ENCODE measurements at regions of chr12 and their contacts with region 1.

Region 1: DNA sequence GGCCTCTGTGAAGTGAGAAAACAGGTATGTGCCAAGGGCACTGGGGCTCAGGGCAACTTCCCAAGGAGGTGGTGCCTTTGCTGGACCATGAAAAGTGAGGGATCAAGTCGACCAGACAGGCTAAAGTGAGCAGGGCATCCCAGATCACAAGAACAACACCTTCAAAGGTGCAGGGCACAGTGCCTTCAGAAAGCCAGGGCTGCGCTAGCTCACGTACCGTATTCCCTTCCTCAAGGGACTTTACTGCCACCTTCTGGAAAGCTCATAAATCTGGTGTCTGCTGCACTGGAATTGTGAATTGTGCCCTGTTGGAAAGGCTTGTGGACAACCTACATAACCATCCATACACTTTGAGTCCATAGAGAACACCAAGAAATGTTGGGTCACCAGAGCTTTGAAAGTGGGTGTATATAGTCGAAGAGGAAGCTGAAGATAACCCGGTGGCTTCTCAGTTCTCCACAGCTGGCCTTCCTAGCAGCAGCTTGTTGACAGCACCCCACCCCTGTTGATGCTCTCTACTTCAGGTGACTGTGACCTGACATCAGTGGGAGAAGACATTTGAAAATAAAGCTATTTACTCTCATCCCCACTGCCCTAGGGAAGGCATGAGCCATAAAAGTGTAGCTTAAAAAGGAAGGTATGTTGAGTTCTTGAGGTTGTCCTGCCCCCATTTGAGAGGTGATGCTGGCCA is 24.5 kb downstream of the FIGNL2 start:
- DNase-seq: peak in 4 of 9 experiments; percentile 22 to 71 (median 45)
- ATAC-seq: no peak
- H3K4me3 ChIP-seq: no peak overlapping the region
- H3K4me3 Mint-ChIP-seq: no peak overlapping the region
- H3K27ac ChIP-seq: peak overlapping the region in 1 of 2 experiments; percentile 15
- H3K27ac Mint-ChIP-seq: peak overlapping the region; percentile 62
- H3K4me1 ChIP-seq: peaks cover 23% of the 10 kb centered on the region
- H3K4me1 Mint-ChIP-seq: peaks cover 41% of the 10 kb centered on the region
- H3K27me3 ChIP-seq: no peaks in the 10 kb centered on the region
- H3K27me3 Mint-ChIP-seq: no peaks in the 10 kb centered on the region
- CTCF ChIP-seq: peak; percentile 18

Region 2: GRCh38 chr12:51424662-51425438 is 399.2 kb before region 1 on chr12 and contains the start of gene SLC4A8:
- CTCF ChIA-PET with region 1: interaction called, 6 read pairs
- POLR2A ChIA-PET with region 1: no interaction called
- intact Hi-C with region 1: loop called (anchors 1 to 2 kb)
- DNase-seq: peak; percentile 46 to 88 (median 71)
- ATAC-seq: peak; percentile 81
- H3K4me3 ChIP-seq: peak within 1 kb of the TSS; percentile 68 to 82
- H3K4me3 Mint-ChIP-seq: peak within 1 kb of the TSS; percentile 82
- H3K27ac ChIP-seq: peak within 1 kb of the TSS in 1 of 2 experiments; percentile 28
- H3K27ac Mint-ChIP-seq: no peak within 1 kb of the TSS
- H3K4me1 ChIP-seq: peaks cover 5% of the 10 kb centered on the region
- H3K4me1 Mint-ChIP-seq: peaks cover 16% of the 10 kb centered on the region
- H3K27me3 ChIP-seq: no peaks in the 10 kb centered on the region
- H3K27me3 Mint-ChIP-seq: no peaks in the 10 kb centered on the region
- CTCF ChIP-seq: peak; percentile 63
- total RNA-seq, gene SLC4A8: 1.5 to 2.4 TPM

Region 3: DNA sequence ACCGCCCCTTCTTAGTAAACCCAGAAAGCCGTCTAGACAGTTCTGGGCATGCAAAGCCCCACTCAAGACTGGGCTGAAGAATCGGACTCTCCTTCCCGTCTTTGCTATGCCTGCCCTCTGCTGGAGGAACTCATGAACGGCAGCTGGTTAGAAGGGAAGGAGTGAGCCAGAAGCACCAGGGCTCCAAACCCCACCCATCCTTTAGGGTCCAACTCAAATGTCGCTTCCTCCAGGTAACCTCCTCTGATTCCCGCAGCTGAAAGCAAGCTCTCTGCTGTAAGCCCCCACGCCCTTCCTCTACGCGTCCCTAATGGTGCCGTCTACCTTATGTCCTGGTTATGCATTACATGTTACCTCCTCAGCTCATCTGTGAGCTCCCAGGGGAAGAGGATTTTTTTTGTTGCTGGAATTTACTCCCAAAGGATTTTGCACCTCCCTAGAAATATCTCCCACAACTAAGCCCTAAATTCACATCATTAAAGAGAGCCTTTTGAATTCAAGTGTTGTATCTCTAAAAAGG is 292.0 kb before region 1 on chr12:
- CTCF ChIA-PET with region 1: interaction called, 17 read pairs
- POLR2A ChIA-PET with region 1: no interaction called
- intact Hi-C with region 1: loop called (anchors 5 kb)
- DNase-seq: peak; percentile 49 to 84 (median 73)
- ATAC-seq: peak; percentile 89
- H3K4me3 ChIP-seq: no peak overlapping the region
- H3K4me3 Mint-ChIP-seq: no peak overlapping the region
- H3K27ac ChIP-seq: no peak overlapping the region
- H3K27ac Mint-ChIP-seq: no peak overlapping the region
- H3K4me1 ChIP-seq: no peaks in the 10 kb centered on the region
- H3K4me1 Mint-ChIP-seq: peaks cover 7% of the 10 kb centered on the region
- H3K27me3 ChIP-seq: no peaks in the 10 kb centered on the region
- H3K27me3 Mint-ChIP-seq: peaks cover 2% of the 10 kb centered on the region
- CTCF ChIP-seq: peak; percentile 82

Region 4: GRCh38 chr12:51590347-51591019 is 233.5 kb before region 1 on chr12:
- CTCF ChIA-PET with region 1: interaction called, 3 read pairs
- POLR2A ChIA-PET with region 1: interaction called, 3 read pairs
- intact Hi-C with region 1: loop called (anchors 2 to 10 kb)
- DNase-seq: peak; percentile 55 to 87 (median 72)
- ATAC-seq: peak; percentile 84
- H3K4me3 ChIP-seq: peak overlapping the region; percentile 46 to 50
- H3K4me3 Mint-ChIP-seq: peak overlapping the region; percentile 88
- H3K27ac ChIP-seq: no peak overlapping the region
- H3K27ac Mint-ChIP-seq: peak overlapping the region; percentile 64
- H3K4me1 ChIP-seq: peaks cover 12% of the 10 kb centered on the region
- H3K4me1 Mint-ChIP-seq: peaks cover 20% of the 10 kb centered on the region
- H3K27me3 ChIP-seq: peaks cover 0 to 12% of the 10 kb centered on the region in 2 experiments
- H3K27me3 Mint-ChIP-seq: peaks cover 37% of the 10 kb centered on the region
- CTCF ChIP-seq: peak; percentile 56

Region 5: GRCh38 chr12:51871126-51871525 is 47.1 kb after region 1 on chr12:
- CTCF ChIA-PET with region 1: interaction called, 8 read pairs
- POLR2A ChIA-PET with region 1: no interaction called
- intact Hi-C with region 1: loop called in 1 of 2 experiments (anchors 2 kb)
- DNase-seq: peak in 1 of 9 experiments; percentile 25
- ATAC-seq: no peak
- H3K4me3 ChIP-seq: no peak overlapping the region
- H3K4me3 Mint-ChIP-seq: no peak overlapping the region
- H3K27ac ChIP-seq: no peak overlapping the region
- H3K27ac Mint-ChIP-seq: no peak overlapping the region
- H3K4me1 ChIP-seq: peaks cover 6% of the 10 kb centered on the region
- H3K4me1 Mint-ChIP-seq: peaks cover 11% of the 10 kb centered on the region
- H3K27me3 ChIP-seq: peaks cover 8 to 15% of the 10 kb centered on the region in 2 experiments
- H3K27me3 Mint-ChIP-seq: peaks cover 49% of the 10 kb centered on the region
- CTCF ChIP-seq: no peak

Region 6: DNA sequence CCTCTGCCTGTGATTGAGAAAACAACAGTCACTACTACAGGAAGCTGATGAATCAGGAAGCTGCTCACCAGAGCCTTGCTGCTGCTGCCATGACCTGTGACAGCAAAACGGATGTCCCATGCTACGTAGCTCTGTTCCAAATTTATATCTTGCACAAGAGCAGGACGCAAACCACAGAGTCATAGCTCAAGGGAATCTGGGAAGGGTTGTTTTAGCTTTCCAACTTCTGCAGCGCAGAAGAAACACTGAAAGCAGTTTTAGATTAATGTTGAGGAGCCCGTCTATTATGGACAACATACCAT is 62.0 kb after region 1 on chr12:
- CTCF ChIA-PET with region 1: no interaction called
- POLR2A ChIA-PET with region 1: interaction called, 17 read pairs
- intact Hi-C with region 1: loop called in 1 of 2 experiments (anchors 5 kb)
- DNase-seq: peak; percentile 8 to 77 (median 52)
- ATAC-seq: peak; percentile 97
- H3K4me3 ChIP-seq: no peak overlapping the region
- H3K4me3 Mint-ChIP-seq: peak overlapping the region; percentile 55
- H3K27ac ChIP-seq: peak overlapping the region in 1 of 2 experiments; percentile 62
- H3K27ac Mint-ChIP-seq: peak overlapping the region; percentile 91
- H3K4me1 ChIP-seq: peaks cover 8% of the 10 kb centered on the region
- H3K4me1 Mint-ChIP-seq: peaks cover 15% of the 10 kb centered on the region
- H3K27me3 ChIP-seq: no peaks in the 10 kb centered on the region
- H3K27me3 Mint-ChIP-seq: no peaks in the 10 kb centered on the region
- CTCF ChIP-seq: no peak

Region 7: DNA sequence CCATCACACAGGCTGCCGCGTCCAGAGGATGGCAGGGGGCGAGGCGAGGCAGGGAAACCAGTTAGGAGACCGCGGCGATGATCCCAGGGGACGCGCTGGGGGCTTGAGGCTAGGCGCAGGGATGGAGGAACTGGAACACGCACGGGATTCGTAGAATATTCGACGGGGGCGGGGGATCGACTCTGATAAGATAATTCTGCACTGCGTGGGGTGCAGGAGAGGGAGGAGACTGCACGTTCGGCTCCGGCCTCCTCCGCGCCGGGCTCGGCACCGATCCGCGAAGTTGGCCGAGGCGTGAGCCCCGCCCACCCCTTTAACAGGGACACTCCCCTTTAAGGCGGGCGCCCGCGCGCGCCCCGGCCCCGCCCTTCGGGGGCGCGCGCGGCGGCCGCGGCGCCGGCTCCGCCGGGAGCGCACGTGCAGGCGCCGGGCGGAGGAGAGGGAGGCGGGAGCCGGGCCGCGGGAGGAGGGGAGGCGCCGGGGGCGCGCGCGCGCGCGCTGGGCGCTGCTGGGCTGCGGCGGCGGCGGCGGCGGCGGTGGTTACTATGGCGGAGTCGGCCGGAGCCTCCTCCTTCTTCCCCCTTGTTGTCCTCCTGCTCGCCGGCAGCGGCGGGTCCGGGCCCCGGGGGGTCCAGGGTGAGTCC is 127.3 kb after region 1 on chr12 and contains the start of gene ACVR1B:
- CTCF ChIA-PET with region 1: no interaction called
- POLR2A ChIA-PET with region 1: interaction called, 4 read pairs
- intact Hi-C with region 1: loop called (anchors 2 kb)
- DNase-seq: peak; percentile 84 to 95 (median 91)
- ATAC-seq: peak; percentile 95
- H3K4me3 ChIP-seq: peak within 1 kb of the TSS; percentile 76 to 93
- H3K4me3 Mint-ChIP-seq: peak within 1 kb of the TSS; percentile 98
- H3K27ac ChIP-seq: peak within 1 kb of the TSS; percentile 44 to 69
- H3K27ac Mint-ChIP-seq: peak within 1 kb of the TSS; percentile 91
- H3K4me1 ChIP-seq: peaks cover 38% of the 10 kb centered on the region
- H3K4me1 Mint-ChIP-seq: peaks cover 42% of the 10 kb centered on the region
- H3K27me3 ChIP-seq: no peaks in the 10 kb centered on the region
- H3K27me3 Mint-ChIP-seq: no peaks in the 10 kb centered on the region
- CTCF ChIP-seq: no peak
- total RNA-seq, gene ACVR1B: 12.0 to 13.7 TPM

Measured in CD8-positive, alpha-beta T cell (primary cell).